T-cell (primary cell): ENCODE measurements at regions of chr17 and their contacts with region 1.

Region 1: GRCh38 chr17:78736526-78737079 is 45.5 kb downstream of the CYTH1 start:
- DNase-seq: peak in 34 of 35 experiments; percentile 58 to 81 (median 68)
- ATAC-seq: peak; percentile 86 to 89 (median 87)
- H3K4me3 ChIP-seq: peak overlapping the region; percentile 76 to 96
- H3K4me3 Mint-ChIP-seq: peak overlapping the region; percentile 86 to 95 (median 87)
- H3K27ac ChIP-seq: peak overlapping the region; percentile 75
- H3K27ac Mint-ChIP-seq: peak overlapping the region; percentile 90 to 97
- H3K4me1 ChIP-seq: peaks cover 75 to 80% of the 10 kb centered on the region in 2 experiments
- H3K4me1 Mint-ChIP-seq: peaks cover 88 to 96% (median 93%) of the 10 kb centered on the region in 3 donors
- H3K27me3 ChIP-seq: no peaks in the 10 kb centered on the region
- H3K27me3 Mint-ChIP-seq: no peaks in the 10 kb centered on the region

Region 2: GRCh38 chr17:78725448-78726021 is 11.1 kb before region 1 on chr17:
- CTCF ChIA-PET with region 1: interaction called in 1 of 2 experiments, 4 read pairs
- POLR2A ChIA-PET with region 1: interaction called, 3 to 17 read pairs
- DNase-seq: peak in 3 of 35 experiments; percentile 2 to 61 (median 29)
- ATAC-seq: peak; percentile 54 to 71 (median 59)
- H3K4me3 ChIP-seq: peak overlapping the region in 1 of 2 donors; percentile 52
- H3K4me3 Mint-ChIP-seq: peak overlapping the region; percentile 62 to 80 (median 74)
- H3K27ac ChIP-seq: peak overlapping the region; percentile 44
- H3K27ac Mint-ChIP-seq: peak overlapping the region; percentile 87 to 91
- H3K4me1 ChIP-seq: peaks cover 68 to 97% of the 10 kb centered on the region in 2 experiments
- H3K4me1 Mint-ChIP-seq: peaks cover 93% of the 10 kb centered on the region in 3 donors
- H3K27me3 ChIP-seq: no peaks in the 10 kb centered on the region
- H3K27me3 Mint-ChIP-seq: no peaks in the 10 kb centered on the region

Region 3: GRCh38 chr17:78759203-78759968 is 22.8 kb after region 1 on chr17:
- CTCF ChIA-PET with region 1: interaction called, 3 to 13 read pairs
- POLR2A ChIA-PET with region 1: interaction called in 1 of 2 experiments, 5 read pairs
- DNase-seq: peak; percentile 57 to 94 (median 89)
- ATAC-seq: peak; percentile 89 to 95 (median 93)
- H3K4me3 ChIP-seq: peak overlapping the region; percentile 16 to 39
- H3K4me3 Mint-ChIP-seq: peak overlapping the region; percentile 60 to 70 (median 66)
- H3K27ac ChIP-seq: peak overlapping the region; percentile 95
- H3K27ac Mint-ChIP-seq: peak overlapping the region; percentile 92 to 94
- H3K4me1 ChIP-seq: peaks cover 56 to 85% of the 10 kb centered on the region in 2 experiments
- H3K4me1 Mint-ChIP-seq: peaks cover 83 to 89% (median 84%) of the 10 kb centered on the region in 3 donors
- H3K27me3 ChIP-seq: no peaks in the 10 kb centered on the region
- H3K27me3 Mint-ChIP-seq: no peaks in the 10 kb centered on the region

Region 4: DNA sequence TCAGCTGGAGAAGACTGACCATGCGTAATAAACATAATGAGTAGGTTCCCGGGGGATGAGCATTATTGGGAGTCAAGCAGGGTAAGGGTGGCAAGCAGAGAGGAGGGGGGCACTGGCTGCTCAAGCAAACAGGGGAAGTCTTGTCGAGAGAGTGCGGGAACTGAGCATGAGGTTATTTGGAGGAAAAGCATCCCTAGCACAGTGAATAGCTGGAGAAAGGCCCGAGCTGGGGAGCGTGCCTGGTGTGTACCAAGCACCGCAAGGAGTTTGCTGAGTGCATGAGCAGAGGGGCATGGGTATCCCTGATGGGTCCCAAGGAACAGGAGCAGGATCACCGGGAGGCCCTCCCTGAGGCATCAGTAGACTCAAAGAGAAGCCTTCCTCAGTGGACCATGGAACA is 28.3 kb after region 1 on chr17:
- CTCF ChIA-PET with region 1: interaction called, 3 to 13 read pairs
- POLR2A ChIA-PET with region 1: interaction called, 5 to 13 read pairs
- DNase-seq: no peak
- ATAC-seq: no peak
- H3K4me3 ChIP-seq: peak overlapping the region in 1 of 2 donors; percentile 45
- H3K4me3 Mint-ChIP-seq: peak overlapping the region in 2 of 3 donors; percentile 37 to 40
- H3K27ac ChIP-seq: peak overlapping the region; percentile 50
- H3K27ac Mint-ChIP-seq: peak overlapping the region; percentile 58 to 88
- H3K4me1 ChIP-seq: peaks cover 76 to 89% of the 10 kb centered on the region in 2 experiments
- H3K4me1 Mint-ChIP-seq: peaks cover 47 to 54% (median 52%) of the 10 kb centered on the region in 3 donors
- H3K27me3 ChIP-seq: no peaks in the 10 kb centered on the region
- H3K27me3 Mint-ChIP-seq: no peaks in the 10 kb centered on the region

Region 5: GRCh38 chr17:78781104-78781947 is 44.7 kb after region 1 on chr17:
- CTCF ChIA-PET with region 1: interaction called, 4 read pairs
- POLR2A ChIA-PET with region 1: interaction called in 1 of 2 experiments, 11 read pairs
- DNase-seq: peak in 16 of 35 experiments; percentile 18 to 67 (median 46)
- ATAC-seq: peak in 3 of 4 experiments; percentile 2 to 14 (median 5)
- H3K4me3 ChIP-seq: peak overlapping the region; percentile 62 to 94
- H3K4me3 Mint-ChIP-seq: peak overlapping the region; percentile 89 to 97 (median 90)
- H3K27ac ChIP-seq: peak overlapping the region; percentile 83
- H3K27ac Mint-ChIP-seq: peak overlapping the region; percentile 93 to 94
- H3K4me1 ChIP-seq: peaks cover 14 to 80% of the 10 kb centered on the region in 2 experiments
- H3K4me1 Mint-ChIP-seq: peaks cover 54 to 62% (median 59%) of the 10 kb centered on the region in 3 donors
- H3K27me3 ChIP-seq: no peaks in the 10 kb centered on the region
- H3K27me3 Mint-ChIP-seq: no peaks in the 10 kb centered on the region

Region 6: GRCh38 chr17:78829473-78829872 is 92.9 kb after region 1 on chr17:
- CTCF ChIA-PET with region 1: interaction called in 1 of 2 experiments, 8 read pairs
- POLR2A ChIA-PET with region 1: interaction called in 1 of 2 experiments, 11 read pairs
- DNase-seq: no peak
- ATAC-seq: no peak
- H3K4me3 ChIP-seq: no peak overlapping the region
- H3K4me3 Mint-ChIP-seq: no peak overlapping the region
- H3K27ac ChIP-seq: no peak overlapping the region
- H3K27ac Mint-ChIP-seq: no peak overlapping the region
- H3K4me1 ChIP-seq: no peaks in the 10 kb centered on the region
- H3K4me1 Mint-ChIP-seq: peaks cover 22 to 39% (median 31%) of the 10 kb centered on the region in 3 donors
- H3K27me3 ChIP-seq: no peaks in the 10 kb centered on the region
- H3K27me3 Mint-ChIP-seq: no peaks in the 10 kb centered on the region